Astrocyte of the cerebellum (primary cell): ENCODE measurements at regions of chr10 and their contacts with region 1.

Region 1: DNA sequence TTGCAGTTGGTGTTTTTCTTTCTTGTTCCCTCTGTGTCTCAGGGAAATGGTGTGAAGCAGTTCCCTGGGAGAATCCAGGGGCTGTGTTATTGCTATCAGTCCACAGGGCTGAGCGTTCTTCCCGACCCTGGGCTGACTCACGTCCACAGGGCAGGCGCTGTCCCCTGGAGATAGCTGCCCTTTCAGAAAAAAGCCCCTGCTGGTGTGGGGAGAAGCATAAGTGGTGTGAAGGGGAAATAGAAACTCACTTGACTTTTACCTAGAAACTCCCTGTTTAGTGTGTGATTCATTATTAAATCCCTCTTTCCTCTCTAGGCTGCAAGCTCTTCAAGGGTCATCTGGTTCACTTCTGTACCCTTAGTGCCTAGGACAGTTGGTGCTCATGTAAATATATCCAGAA is 63.3 kb upstream of the SMNDC1 start:
- DNase-seq: no peak
- H3K4me3 ChIP-seq: no peak overlapping the region
- CTCF ChIP-seq: no peak

Region 2: GRCh38 chr10:110446954-110447608 is 79.1 kb after region 1 on chr10:
- in situ Hi-C with region 1: loop called (anchors 10 kb)
- DNase-seq: peak; percentile 66
- H3K4me3 ChIP-seq: no peak overlapping the region
- CTCF ChIP-seq: peak; percentile 36

Region 3: GRCh38 chr10:110512461-110513187 is 144.6 kb after region 1 on chr10:
- in situ Hi-C with region 1: no loop called
- DNase-seq: peak; percentile 71
- H3K4me3 ChIP-seq: no peak overlapping the region
- CTCF ChIP-seq: no peak